ENCODE measurements at regions of chr6 and their contacts with region 1.

Region 1: DNA sequence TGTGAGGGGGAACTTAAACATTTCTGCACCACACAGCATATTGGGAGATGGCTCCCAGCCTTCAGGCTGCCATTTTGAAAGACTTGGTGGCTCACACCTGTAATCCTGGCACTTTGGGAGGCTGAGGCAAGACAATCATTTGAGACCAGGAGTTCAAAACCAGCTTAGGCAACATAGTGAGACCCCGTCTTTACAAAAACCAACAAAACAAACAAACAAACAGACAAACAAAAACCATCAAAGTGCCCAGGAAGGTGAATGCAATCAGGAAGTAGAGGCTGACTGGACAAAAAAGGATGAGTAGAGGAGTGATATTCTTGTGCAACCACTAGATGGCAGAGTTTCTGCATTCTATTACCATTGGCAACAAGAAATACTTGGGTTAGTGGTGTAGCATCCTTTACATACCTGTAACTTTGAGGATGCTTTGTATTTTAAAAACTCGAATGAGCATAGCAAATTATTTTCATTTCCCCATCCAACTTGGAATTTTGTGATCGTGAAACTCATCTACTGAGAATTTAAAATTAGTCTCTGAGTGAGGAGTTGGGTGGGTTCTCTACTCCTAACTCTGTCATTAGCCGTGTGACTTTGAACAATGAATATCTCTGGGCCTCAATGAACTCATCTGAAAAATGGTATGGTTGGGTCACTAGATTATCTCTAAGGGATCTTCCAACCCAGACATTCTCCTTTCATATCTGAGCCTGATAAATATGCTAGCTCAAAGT is 84.4 kb downstream of the CRYBG1 start:
- DNase-seq: peak in 2 of 4 donors; percentile 27 to 54
- ATAC-seq: peak; percentile 70
- H3K4me3 ChIP-seq: no peak overlapping the region
- H3K27ac ChIP-seq: no peak overlapping the region
- H3K4me1 ChIP-seq: no peaks in the 10 kb centered on the region
- H3K27me3 ChIP-seq: no peaks in the 10 kb centered on the region
- CTCF ChIP-seq: peak; percentile 51 to 93 (median 83)
- POLR2A ChIP-seq: no peak

Region 2: DNA sequence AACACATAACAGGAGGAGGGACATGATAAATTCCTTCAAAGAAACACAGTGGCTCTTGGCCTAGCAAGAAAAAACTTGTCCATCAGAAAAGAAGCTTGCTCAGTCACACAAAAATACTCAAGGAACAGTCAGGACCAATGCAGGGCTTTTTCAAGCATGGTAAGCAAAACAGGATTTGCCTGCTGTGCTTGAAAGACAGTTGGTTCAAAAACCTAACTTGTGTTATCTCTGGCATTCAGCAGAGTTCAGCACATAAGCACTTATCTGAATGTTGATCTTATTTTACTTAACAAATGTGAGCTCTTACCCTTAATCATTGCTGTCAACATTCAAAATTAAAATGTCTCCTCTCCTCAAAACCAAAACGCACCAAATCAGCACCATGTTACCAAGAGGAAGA is 157.7 kb before region 1 on chr6:
- intact Hi-C with region 1: no loop called
- DNase-seq: no peak
- ATAC-seq: no peak
- H3K4me3 ChIP-seq: no peak overlapping the region
- H3K27ac ChIP-seq: no peak overlapping the region
- H3K4me1 ChIP-seq: peaks cover 4% of the 10 kb centered on the region
- H3K27me3 ChIP-seq: no peaks in the 10 kb centered on the region
- CTCF ChIP-seq: no peak
- POLR2A ChIP-seq: no peak

Region 3: DNA sequence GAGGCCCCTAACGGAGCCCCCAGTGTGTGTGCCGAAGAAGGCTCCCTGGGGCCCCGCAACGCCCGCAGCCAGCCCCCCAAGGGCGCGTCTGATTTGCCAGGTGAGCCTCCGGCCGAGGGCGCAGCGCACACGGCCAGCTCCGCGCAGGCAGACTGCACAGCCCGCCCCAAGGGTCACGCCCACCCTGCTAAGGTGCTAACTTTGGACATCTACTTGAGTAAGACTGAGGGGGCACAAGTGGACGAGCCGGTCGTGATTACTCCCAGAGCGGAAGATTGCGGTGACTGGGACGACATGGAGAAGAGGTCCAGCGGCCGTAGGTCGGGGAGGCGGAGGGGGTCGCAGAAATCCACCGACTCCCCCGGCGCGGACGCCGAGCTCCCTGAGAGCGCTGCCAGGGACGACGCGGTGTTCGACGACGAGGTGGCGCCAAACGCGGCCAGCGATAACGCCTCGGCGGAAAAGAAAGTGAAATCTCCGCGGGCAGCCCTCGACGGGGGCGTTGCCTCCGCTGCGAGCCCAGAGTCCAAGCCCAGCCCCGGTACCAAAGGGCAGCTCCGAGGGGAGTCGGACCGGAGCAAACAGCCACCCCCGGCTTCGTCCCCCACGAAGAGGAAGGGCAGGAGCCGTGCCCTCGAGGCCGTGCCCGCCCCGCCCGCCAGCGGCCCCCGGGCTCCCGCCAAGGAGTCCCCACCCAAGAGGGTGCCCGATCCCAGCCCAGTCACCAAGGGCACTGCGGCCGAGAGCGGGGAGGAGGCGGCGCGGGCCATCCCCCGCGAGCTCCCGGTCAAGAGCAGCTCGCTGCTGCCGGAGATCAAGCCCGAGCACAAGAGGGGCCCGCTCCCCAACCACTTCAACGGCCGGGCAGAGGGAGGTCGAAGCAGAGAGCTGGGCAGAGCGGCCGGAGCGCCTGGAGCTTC is 67.4 kb after region 1 on chr6:
- intact Hi-C with region 1: loop called (anchors 10 kb)
- DNase-seq: peak; percentile 63 to 78 (median 76)
- ATAC-seq: peak; percentile 80
- H3K4me3 ChIP-seq: peak overlapping the region; percentile 76 to 88
- H3K27ac ChIP-seq: peak overlapping the region; percentile 51 to 95 (median 82)
- H3K4me1 ChIP-seq: peaks cover 38% of the 10 kb centered on the region
- H3K27me3 ChIP-seq: no peaks in the 10 kb centered on the region
- CTCF ChIP-seq: peak in 3 of 7 experiments; percentile 23 to 28 (median 27)
- POLR2A ChIP-seq: peak; percentile 8 to 50 (median 28)

Region 4: GRCh38 chr6:106556368-106556960 is 111.5 kb after region 1 on chr6:
- intact Hi-C with region 1: loop called (anchors 5 kb)
- DNase-seq: no peak
- ATAC-seq: no peak
- H3K4me3 ChIP-seq: no peak overlapping the region
- H3K27ac ChIP-seq: no peak overlapping the region
- H3K4me1 ChIP-seq: no peaks in the 10 kb centered on the region
- H3K27me3 ChIP-seq: no peaks in the 10 kb centered on the region
- CTCF ChIP-seq: peak in 6 of 7 experiments; percentile 14 to 49 (median 36)
- POLR2A ChIP-seq: no peak

Region 5: DNA sequence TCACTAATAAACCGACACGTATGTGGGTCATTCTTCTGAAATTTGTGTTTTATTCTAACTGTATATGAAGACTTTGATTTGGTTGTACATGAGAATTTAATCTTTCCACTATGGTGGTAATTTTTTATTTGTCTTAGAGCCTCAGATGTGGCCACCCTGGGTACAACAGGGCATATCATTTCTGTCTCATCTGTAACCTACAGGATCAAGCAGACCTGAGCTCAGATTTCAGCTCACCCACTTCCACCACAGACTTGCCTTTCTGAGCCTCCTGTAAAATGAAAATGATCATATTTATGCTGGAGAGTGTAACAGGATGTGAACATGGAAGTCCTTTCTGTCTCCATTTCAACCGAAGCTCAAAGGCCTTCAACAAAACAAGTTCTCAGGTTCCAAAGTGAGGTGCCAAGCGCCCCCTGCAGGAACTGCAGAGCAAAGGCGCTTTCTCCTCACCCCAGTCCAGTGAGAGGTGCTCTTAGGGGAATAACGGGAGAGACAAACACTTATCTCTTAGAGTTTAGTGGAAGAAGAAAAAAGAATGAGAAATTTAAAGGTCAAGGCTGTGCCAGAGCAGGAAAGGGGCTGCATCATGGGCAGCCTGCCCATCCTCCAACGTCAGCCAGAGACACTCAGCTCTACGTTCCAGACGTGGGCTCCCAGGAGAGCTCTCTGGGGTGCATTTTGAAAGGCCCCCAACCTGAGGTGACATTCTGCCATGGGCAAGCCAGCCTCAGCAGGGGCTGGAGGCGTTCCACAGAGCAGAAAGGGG is 552.6 kb after region 1 on chr6:
- intact Hi-C with region 1: loop called (anchors 10 kb)
- DNase-seq: peak; percentile 54 to 66 (median 61)
- ATAC-seq: peak; percentile 81
- H3K4me3 ChIP-seq: no peak overlapping the region
- H3K27ac ChIP-seq: no peak overlapping the region
- H3K4me1 ChIP-seq: peaks cover 8% of the 10 kb centered on the region
- H3K27me3 ChIP-seq: no peaks in the 10 kb centered on the region
- CTCF ChIP-seq: peak; percentile 70 to 88 (median 80)
- POLR2A ChIP-seq: no peak